Activated CD8-positive, alpha-beta memory T cell treated with anti-CD3 and anti-CD28 coated beads, Interleukin-2, amount 10 ng/mL, durations not matched to agents 7 days and 5 days (primary cell): ENCODE measurements at regions of chr11 and their contacts with region 1.

Region 1: DNA sequence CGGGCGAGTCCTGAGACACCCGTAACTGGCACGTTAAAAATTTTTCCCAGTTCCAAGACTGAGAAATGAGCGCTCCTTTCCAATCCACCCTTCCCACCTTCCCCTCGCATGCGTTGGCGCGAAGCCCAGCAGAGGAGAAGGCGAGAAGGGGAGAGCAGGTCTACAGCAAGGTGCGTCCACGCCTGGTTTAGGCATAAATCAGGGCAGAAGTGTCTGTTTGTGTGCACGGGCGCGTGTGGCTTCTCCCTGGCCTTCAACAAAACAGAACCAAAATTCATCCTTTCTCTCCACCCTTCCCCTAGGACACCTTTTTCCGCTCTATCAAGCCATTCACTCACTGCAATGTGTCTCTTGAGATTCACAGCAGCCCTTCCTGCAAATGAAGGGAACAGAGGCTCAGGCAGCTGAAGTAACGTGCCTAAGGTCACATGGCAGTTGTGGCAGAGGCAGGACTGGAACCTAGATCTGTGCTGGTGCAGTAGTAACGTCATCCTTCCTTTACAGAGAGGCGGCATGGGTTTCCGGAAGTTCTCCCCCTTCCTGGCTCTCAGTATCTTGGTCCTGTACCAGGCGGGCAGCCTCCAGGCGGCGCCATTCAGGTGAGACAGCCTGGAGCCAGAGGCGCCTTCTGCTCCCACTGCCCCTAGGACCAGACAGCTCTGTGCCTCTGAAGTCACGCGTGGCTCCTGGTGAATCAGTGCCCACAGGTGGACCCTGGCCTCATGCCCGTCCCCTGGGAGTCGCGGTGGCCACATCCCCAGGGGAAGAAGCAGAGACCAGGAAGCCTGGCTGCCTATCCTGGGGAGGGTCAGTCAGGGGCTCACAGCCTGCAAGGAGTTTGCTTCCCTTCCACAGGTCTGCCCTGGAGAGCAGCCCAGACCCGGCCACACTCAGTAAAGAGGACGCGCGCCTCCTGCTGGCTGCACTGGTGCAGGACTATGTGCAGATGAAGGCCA is 1.1 kb downstream of the CALCB start:
- DNase-seq: peak; percentile 91
- ATAC-seq: peak; percentile 89
- H3K4me3 Mint-ChIP-seq: peak overlapping the region; percentile 70
- H3K27ac Mint-ChIP-seq: peak overlapping the region; percentile 47
- H3K4me1 Mint-ChIP-seq: peaks cover 21% of the 10 kb centered on the region
- H3K27me3 Mint-ChIP-seq: peaks cover 30% of the 10 kb centered on the region

Region 2: DNA sequence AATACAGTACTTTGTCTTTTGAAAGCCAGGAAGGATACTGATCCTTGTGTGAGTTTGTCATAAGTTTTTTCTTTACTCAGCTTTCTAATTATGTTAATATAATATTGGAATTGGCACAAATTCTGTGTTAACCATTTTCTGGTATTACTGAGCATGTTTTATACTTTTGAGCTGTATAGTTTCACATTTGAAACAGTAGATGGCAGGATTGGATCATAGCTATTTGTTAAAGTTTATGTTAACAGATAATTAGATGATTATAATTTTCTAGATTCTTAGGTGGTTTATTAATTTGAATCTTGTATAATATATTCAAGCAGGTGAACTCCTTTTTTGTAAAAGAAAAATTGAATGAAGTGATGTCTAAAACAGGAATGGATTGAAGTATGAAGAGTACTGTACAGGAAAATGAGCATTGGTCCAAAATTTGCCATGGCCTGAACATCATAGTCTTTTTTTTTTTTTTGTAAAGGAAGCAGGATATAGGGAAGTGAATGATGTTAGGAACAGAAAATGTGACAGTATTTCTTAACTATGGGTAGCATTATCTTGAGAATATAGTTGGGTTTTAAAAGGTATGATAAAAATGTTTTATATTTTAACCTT is 284.5 kb before region 1 on chr11:
- CTCF ChIA-PET with region 1: interaction called, 23 read pairs
- DNase-seq: no peak
- ATAC-seq: no peak
- H3K4me3 Mint-ChIP-seq: no peak overlapping the region
- H3K27ac Mint-ChIP-seq: no peak overlapping the region
- H3K4me1 Mint-ChIP-seq: peaks cover 9% of the 10 kb centered on the region
- H3K27me3 Mint-ChIP-seq: no peaks in the 10 kb centered on the region

Region 3: DNA sequence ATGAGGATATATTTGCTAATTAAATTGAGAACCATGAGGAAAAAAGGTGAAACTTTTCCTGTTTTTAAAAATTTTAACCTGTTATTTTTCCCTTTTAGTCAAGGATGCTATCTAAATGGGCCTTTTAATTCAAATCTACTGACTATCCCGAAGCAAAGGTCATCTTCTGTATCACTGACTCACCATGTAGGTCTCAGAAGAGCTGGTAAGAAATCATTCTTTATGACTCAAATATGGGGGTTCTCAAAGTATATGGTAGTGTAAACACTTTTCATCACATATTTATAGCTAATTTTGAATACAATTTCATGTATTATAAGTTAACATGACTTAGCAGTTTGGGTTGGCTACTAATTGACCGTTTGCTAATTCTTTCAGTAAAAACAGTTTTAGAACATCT is 270.6 kb before region 1 on chr11:
- CTCF ChIA-PET with region 1: no interaction called
- DNase-seq: no peak
- ATAC-seq: no peak
- H3K4me3 Mint-ChIP-seq: no peak overlapping the region
- H3K27ac Mint-ChIP-seq: no peak overlapping the region
- H3K4me1 Mint-ChIP-seq: peaks cover 3% of the 10 kb centered on the region
- H3K27me3 Mint-ChIP-seq: no peaks in the 10 kb centered on the region

Region 4: DNA sequence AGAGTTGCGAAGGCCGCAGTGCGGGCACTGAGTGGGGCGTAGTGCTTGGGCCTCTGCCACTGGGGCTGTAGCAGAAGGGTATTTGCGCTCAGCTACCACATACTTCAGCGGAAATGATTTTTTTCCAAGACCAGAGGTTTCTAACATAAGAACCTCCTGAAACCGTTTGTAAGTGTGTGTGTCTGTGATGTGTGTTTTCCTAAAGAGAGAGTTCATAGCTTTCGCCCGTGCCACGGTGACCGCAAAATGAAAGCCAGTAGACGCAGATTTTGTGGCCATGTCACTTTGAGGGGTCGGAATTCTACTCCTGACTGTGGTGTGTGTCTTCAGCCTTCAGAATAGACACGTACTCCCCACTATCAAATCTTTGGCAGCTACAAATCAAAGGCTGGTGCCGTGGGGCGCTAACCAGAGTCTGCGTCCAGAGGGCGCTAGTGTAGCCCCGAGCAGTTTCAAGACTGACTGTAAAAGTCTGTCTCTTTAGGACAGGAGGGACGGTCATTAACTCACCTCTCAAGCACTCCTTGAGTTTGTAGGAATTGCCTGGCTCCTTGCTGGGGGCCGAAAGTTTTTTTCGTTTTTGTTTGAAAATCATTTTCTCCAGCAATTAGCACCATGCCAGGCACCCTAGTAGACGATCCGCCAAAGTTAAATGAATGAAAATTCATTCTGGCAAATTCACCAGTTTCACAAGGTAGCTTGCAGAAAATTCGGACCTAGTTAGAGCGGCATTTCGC is 99.8 kb before region 1 on chr11:
- CTCF ChIA-PET with region 1: interaction called, 56 read pairs
- DNase-seq: peak; percentile 77
- ATAC-seq: peak; percentile 68
- H3K4me3 Mint-ChIP-seq: peak overlapping the region; percentile 50
- H3K27ac Mint-ChIP-seq: no peak overlapping the region
- H3K4me1 Mint-ChIP-seq: peaks cover 28% of the 10 kb centered on the region
- H3K27me3 Mint-ChIP-seq: peaks cover 77% of the 10 kb centered on the region

Region 5: GRCh38 chr11:15006139-15006759 is 68.2 kb before region 1 on chr11:
- CTCF ChIA-PET with region 1: interaction called, 15 read pairs
- DNase-seq: no peak
- ATAC-seq: peak; percentile 64
- H3K4me3 Mint-ChIP-seq: no peak overlapping the region
- H3K27ac Mint-ChIP-seq: no peak overlapping the region
- H3K4me1 Mint-ChIP-seq: no peaks in the 10 kb centered on the region
- H3K27me3 Mint-ChIP-seq: peaks cover 53% of the 10 kb centered on the region

Region 6: GRCh38 chr11:15059132-15059915 is 15.2 kb before region 1 on chr11:
- CTCF ChIA-PET with region 1: interaction called, 10 read pairs
- DNase-seq: no peak
- ATAC-seq: no peak
- H3K4me3 Mint-ChIP-seq: no peak overlapping the region
- H3K27ac Mint-ChIP-seq: no peak overlapping the region
- H3K4me1 Mint-ChIP-seq: no peaks in the 10 kb centered on the region
- H3K27me3 Mint-ChIP-seq: peaks cover 25% of the 10 kb centered on the region

Region 7: GRCh38 chr11:15093432-15093831 is 18.9 kb after region 1 on chr11:
- CTCF ChIA-PET with region 1: interaction called, 26 read pairs
- DNase-seq: no peak
- ATAC-seq: no peak
- H3K4me3 Mint-ChIP-seq: no peak overlapping the region
- H3K27ac Mint-ChIP-seq: no peak overlapping the region
- H3K4me1 Mint-ChIP-seq: peaks cover 18% of the 10 kb centered on the region
- H3K27me3 Mint-ChIP-seq: peaks cover 21% of the 10 kb centered on the region

Region 8: GRCh38 chr11:15159085-15159484 is 84.6 kb after region 1 on chr11:
- CTCF ChIA-PET with region 1: interaction called, 10 read pairs
- DNase-seq: no peak
- ATAC-seq: peak; percentile 45
- H3K4me3 Mint-ChIP-seq: no peak overlapping the region
- H3K27ac Mint-ChIP-seq: no peak overlapping the region
- H3K4me1 Mint-ChIP-seq: no peaks in the 10 kb centered on the region
- H3K27me3 Mint-ChIP-seq: peaks cover 14% of the 10 kb centered on the region